ENCODE measurements at regions of chr16 and their contacts with region 1.

Region 1: GRCh38 chr16:23423496-23424049 is 29.4 kb downstream of the COG7 start:
- DNase-seq: peak; percentile 94
- ATAC-seq: peak; percentile 78
- H3K4me3 ChIP-seq: no peak overlapping the region
- H3K27ac ChIP-seq: peak overlapping the region; percentile 98
- H3K4me1 ChIP-seq: peaks cover 19% of the 10 kb centered on the region
- H3K27me3 ChIP-seq: no peaks in the 10 kb centered on the region
- CTCF ChIP-seq: no peak

Region 2: DNA sequence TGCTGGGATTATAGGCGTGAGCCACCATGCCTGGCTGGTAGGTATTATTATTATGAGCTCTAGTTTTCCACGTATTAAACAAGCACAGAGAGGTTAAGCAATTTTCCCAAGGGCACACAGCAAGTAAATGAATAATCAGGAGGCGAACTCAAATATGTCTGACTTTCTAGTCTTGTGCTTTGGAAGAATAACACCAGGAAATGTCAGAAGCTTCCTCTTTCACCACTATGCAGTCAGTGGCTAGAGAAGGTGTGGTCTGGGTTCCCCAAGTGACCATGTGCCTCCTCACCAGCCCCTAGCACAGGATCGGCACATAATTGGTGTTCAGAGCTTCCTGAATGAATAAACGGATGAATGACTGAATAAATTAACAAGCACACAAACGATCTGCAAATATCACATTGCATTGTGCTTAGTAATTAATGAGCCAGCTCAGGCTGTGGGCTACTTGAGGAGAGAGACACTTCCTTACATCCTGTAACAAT is 143.0 kb before region 1 on chr16:
- CTCF ChIA-PET with region 1: no interaction called
- POLR2A ChIA-PET with region 1: no interaction called
- intact Hi-C with region 1: loop called (anchors 5 kb)
- DNase-seq: peak; percentile 82
- ATAC-seq: peak; percentile 75
- H3K4me3 ChIP-seq: no peak overlapping the region
- H3K27ac ChIP-seq: peak overlapping the region; percentile 32
- H3K4me1 ChIP-seq: peaks cover 48% of the 10 kb centered on the region
- H3K27me3 ChIP-seq: no peaks in the 10 kb centered on the region
- CTCF ChIP-seq: no peak

Region 3: GRCh38 chr16:23379707-23380106 is 43.9 kb before region 1 on chr16:
- CTCF ChIA-PET with region 1: no interaction called
- POLR2A ChIA-PET with region 1: no interaction called
- intact Hi-C with region 1: no loop called
- DNase-seq: no peak
- ATAC-seq: no peak
- H3K4me3 ChIP-seq: no peak overlapping the region
- H3K27ac ChIP-seq: no peak overlapping the region
- H3K4me1 ChIP-seq: no peaks in the 10 kb centered on the region
- H3K27me3 ChIP-seq: no peaks in the 10 kb centered on the region
- CTCF ChIP-seq: no peak

Region 4: DNA sequence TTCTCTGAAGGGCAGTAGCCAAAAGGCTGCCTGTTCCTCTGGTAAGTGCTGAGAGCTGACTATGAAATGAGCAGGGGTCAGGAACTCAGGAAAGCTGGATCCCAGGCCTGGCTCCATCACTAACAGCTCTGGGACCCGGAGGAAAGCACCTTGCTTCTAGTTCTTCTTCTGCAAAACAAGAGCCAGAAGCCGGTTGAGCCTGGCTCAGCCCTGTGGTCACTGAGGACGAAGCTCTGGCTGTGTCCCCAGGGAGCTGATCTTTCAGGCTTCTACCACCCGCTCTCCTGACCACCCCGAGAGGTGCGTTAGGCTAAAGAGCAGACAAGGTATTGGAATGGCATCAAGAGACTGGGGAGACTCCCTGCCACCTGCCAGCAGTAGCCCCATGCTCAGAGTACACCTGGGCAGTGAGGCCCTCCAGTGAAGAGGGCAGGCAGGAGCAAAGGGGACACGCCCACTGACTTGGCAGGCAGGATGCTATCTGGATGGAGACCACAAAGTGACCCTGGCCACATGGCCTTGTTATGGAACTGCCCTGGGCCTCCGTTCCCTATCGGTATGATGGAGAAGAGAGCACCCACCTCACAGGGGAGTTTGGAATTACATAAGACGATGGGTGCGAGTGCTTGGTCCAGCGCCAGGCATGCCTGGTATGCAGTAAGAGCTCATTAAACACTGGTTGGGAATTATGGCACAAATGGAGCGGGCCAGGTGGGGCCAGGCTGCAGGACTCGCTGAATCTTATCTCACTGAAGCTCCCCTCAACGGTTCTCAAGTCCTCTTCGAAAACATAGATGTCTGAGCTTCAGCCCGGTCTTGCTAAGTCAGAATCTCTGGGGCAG is 32.0 kb before region 1 on chr16:
- CTCF ChIA-PET with region 1: interaction called, 6 read pairs
- POLR2A ChIA-PET with region 1: no interaction called
- intact Hi-C with region 1: loop called (anchors 2 kb)
- DNase-seq: no peak
- ATAC-seq: no peak
- H3K4me3 ChIP-seq: no peak overlapping the region
- H3K27ac ChIP-seq: peak overlapping the region; percentile 37
- H3K4me1 ChIP-seq: peaks cover 33% of the 10 kb centered on the region
- H3K27me3 ChIP-seq: no peaks in the 10 kb centered on the region
- CTCF ChIP-seq: no peak

Region 5: DNA sequence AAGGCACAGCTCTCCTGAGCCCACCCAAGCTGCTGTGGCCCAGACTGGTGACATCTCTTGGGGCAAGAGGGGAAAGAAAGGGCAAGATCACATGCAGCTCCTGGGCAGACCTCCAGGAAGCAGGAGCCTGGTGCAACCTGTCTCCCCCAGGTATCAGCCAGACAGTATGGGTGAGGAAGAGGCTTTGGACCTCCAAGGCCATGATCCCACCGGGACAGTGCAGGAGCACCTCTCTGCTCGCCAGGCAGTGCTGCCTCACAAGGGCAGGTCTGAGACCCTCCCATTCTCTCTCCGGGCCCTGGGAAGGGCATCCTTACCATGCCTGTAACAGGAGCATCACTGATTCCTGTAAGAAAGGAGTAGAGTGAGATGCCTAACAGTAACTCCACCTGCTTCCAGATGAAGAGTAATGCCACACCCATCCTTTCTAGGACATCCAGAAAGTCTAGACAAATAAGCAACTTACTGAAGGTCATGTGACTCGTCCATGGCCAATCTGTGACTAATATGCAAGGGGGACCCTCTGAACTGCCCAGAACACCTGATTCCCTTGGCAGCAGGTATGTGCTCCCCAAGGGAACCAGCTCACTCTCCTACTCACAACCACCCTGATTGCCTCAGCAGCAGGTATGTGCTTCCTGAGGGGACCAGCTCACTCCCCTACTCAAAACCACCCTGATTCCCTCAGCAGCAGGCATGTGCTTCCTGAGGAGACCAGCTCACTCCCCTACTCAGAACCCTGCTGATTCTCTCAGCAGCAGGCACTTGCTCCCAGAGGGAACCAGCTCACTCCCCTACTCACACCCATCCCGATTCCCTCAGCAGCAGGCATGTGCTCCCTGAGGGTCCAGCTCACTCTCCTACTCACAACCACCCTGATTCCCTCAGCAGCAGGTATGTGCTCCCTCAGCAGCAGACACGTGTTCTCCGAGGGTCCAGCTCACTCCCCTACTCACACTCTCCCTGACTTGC is 55.3 kb after region 1 on chr16:
- CTCF ChIA-PET with region 1: no interaction called
- POLR2A ChIA-PET with region 1: no interaction called
- intact Hi-C with region 1: no loop called
- DNase-seq: no peak
- ATAC-seq: no peak; the same call in 1 of the 2 replicates
- H3K4me3 ChIP-seq: no peak overlapping the region
- H3K27ac ChIP-seq: no peak overlapping the region
- H3K4me1 ChIP-seq: no peaks in the 10 kb centered on the region
- H3K27me3 ChIP-seq: no peaks in the 10 kb centered on the region
- CTCF ChIP-seq: no peak

Measured in PC-3 (cell line).